ENCODE measurements at regions of chr3 and their contacts with region 1.

Region 1: GRCh38 chr3:150779402-150779858 is 16.5 kb upstream of the SIAH2 start:
- DNase-seq: peak; percentile 60
- ATAC-seq: peak; percentile 95
- H3K4me3 Mint-ChIP-seq: no peak overlapping the region
- H3K27ac Mint-ChIP-seq: no peak overlapping the region
- H3K4me1 Mint-ChIP-seq: no peaks in the 10 kb centered on the region
- H3K27me3 Mint-ChIP-seq: no peaks in the 10 kb centered on the region; the same call in 1 of the 2 replicates
- CTCF ChIP-seq: 0 out of 2 replicates have a peak, but pooled peaks have one; percentile 15

Region 2: DNA sequence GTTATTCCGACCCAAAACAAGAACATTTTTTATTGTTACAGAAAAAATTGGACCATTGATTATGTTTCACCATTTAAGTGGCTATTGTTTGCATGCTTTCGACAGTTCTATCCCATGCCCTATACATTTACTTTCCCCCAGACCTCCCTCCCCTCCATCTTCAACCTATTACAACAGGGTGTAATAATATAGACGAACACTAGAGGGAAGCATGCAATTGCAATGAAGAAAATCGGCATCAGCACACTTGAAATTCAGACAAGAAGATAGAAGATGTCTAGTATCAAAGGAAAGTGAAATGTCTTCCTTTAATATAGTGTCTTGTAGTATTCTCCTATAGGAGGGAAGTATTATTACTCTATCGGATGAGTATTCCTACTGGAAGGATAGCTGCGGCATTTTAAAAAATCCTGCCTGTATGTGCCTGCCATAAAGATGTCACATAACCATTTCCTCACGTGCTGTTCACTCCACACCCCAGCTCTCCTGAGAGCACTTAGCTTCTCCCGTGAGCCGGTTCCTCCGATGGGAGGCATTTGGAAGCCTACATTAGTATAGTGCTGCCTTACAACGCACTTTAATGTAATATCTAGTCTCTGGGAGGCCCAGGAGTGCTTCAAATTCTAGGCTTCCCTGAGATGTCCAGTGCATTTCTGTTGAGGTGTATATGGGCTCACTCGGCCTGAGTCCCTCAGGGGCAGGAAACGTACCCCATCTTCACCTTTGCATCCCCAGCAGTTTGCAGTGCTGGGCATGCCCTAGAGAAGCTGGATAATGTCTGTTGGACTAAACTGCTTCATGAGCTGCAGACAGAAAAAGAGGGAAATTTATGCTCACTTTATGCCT is 57.9 kb before region 1 on chr3:
- CTCF ChIA-PET with region 1: interaction called, 19 read pairs
- POLR2A ChIA-PET with region 1: no interaction called
- DNase-seq: no peak
- ATAC-seq: peak; percentile 89
- H3K4me3 Mint-ChIP-seq: no peak overlapping the region
- H3K27ac Mint-ChIP-seq: no peak overlapping the region
- H3K4me1 Mint-ChIP-seq: no peaks in the 10 kb centered on the region
- H3K27me3 Mint-ChIP-seq: no peaks in the 10 kb centered on the region
- CTCF ChIP-seq: peak; percentile 73

Region 3: DNA sequence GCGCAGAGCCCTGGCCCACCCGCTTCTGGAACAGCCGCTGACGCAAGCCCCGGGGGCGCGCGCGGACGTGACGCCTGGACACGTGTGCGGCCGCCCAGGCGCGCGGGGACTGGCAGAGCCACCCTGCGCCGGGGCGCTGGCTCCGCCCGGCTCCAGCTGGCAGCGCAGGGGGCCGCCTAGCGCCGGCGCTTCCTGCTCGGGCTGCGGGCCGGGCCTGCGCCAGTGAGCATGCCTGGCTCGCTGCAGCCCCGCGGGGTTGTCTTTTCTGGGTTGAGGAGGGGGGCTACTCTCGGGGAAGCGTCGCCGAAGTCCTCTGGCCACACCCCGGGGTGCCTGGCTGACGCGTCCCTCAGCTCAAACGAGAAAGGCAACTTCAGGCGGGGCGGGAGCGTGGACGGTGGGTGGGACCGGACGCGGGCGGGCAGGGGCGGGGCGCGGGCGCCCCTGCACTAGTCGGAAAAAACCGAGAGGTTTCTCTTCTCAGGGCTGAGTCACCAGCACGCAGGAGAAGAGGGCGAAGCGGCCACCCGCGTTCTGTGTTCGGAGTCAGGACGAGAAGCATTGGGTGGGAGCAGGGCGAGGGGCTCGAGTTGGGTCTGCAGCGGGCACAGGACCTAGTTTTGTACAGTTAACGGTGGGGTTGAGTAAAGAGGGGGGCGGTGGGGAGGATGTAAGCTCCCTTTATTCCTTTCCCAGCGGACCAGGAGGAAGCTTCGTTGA is 16.1 kb before region 1 on chr3 and contains the start of gene SIAH2:
- CTCF ChIA-PET with region 1: interaction called, 23 read pairs
- POLR2A ChIA-PET with region 1: no interaction called
- DNase-seq: peak; percentile 69
- ATAC-seq: peak; percentile 73
- H3K4me3 Mint-ChIP-seq: peak within 1 kb of the TSS; percentile 89
- H3K27ac Mint-ChIP-seq: peak within 1 kb of the TSS; percentile 68
- H3K4me1 Mint-ChIP-seq: peaks cover 42% of the 10 kb centered on the region
- H3K27me3 Mint-ChIP-seq: peaks cover 45% of the 10 kb centered on the region
- CTCF ChIP-seq: no peak
- total RNA-seq, gene SIAH2: 15.8 to 17.1 TPM (median 15.9 TPM) in 3 replicates

Region 4: DNA sequence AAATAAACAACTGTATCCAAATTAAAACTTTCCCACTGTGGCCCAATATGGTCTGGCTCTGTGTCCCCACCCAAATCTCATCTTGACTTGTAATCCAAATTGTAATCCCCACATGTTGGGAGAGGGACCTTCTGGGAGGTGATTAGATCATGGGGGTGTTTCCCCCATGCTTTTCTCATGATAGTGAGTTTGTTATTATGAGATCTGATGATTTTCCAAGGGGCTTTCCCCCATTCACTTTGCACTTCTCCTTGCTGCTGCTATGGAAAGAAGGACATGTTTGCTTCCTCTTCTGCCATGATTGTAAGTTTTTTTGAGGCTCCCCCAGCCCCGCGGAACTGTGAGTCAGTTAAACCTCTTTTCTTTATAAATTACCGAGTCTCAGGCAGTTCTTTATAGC is 70.8 kb after region 1 on chr3:
- CTCF ChIA-PET with region 1: no interaction called
- POLR2A ChIA-PET with region 1: no interaction called
- DNase-seq: no peak
- ATAC-seq: no peak
- H3K4me3 Mint-ChIP-seq: no peak overlapping the region
- H3K27ac Mint-ChIP-seq: no peak overlapping the region
- H3K4me1 Mint-ChIP-seq: peaks cover 17% of the 10 kb centered on the region
- H3K27me3 Mint-ChIP-seq: peaks cover 2% of the 10 kb centered on the region; the same call in 1 of the 2 replicates
- CTCF ChIP-seq: no peak

Measured in WTC11 (cell line).